Calu3 (cell line): ENCODE measurements at regions of chr12 and their contacts with region 1.

Region 1: GRCh38 chr12:42790761-42791151 is 201.2 kb upstream of the PRICKLE1 start:
- DNase-seq: peak; percentile 56
- H3K4me3 Mint-ChIP-seq: no peak overlapping the region
- H3K27ac Mint-ChIP-seq: peak overlapping the region; percentile 63
- H3K4me1 Mint-ChIP-seq: peaks cover 29% of the 10 kb centered on the region
- H3K27me3 Mint-ChIP-seq: no peaks in the 10 kb centered on the region
- CTCF ChIP-seq: no peak

Region 2: DNA sequence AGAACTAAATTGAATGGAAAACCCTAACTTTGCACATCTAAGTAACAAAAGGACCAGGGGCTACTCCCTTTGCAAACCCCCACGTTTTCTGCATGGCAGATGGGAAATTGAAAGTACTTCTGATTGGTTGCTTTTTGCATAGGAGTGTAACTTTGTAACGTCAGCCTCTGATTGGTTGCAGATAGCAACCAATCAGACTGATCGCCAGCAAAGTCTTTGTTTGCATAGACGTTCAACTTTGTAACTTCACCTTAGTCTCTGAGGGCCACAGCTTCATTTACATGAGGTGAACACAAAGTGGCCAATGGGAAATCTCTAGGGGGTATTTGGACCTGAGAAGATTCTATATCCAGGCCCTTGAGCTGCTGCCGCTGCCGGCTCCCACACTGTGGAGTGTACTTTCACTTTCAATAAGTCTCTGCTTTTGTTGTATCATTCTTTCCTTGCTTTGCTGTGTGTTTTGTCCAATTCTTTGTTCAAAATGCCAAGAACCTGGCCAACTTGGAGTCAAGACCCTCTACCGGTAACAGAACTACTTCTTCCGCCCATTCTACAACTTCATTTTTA is 98.7 kb before region 1 on chr12:
- CTCF ChIA-PET with region 1: no interaction called
- intact Hi-C with region 1: loop called (anchors 5 kb)
- DNase-seq: peak; percentile 28
- H3K4me3 Mint-ChIP-seq: peak overlapping the region; percentile 70
- H3K27ac Mint-ChIP-seq: peak overlapping the region; percentile 71
- H3K4me1 Mint-ChIP-seq: peaks cover 9% of the 10 kb centered on the region
- H3K27me3 Mint-ChIP-seq: no peaks in the 10 kb centered on the region
- CTCF ChIP-seq: no peak

Region 3: GRCh38 chr12:42809226-42809625 is 18.5 kb after region 1 on chr12:
- CTCF ChIA-PET with region 1: no interaction called
- intact Hi-C with region 1: no loop called
- DNase-seq: no peak
- H3K4me3 Mint-ChIP-seq: no peak overlapping the region
- H3K27ac Mint-ChIP-seq: no peak overlapping the region
- H3K4me1 Mint-ChIP-seq: no peaks in the 10 kb centered on the region
- H3K27me3 Mint-ChIP-seq: no peaks in the 10 kb centered on the region
- CTCF ChIP-seq: no peak